OCI-LY7 (cell line): ENCODE measurements at regions of chr1 and their contacts with region 1.

Region 1: DNA sequence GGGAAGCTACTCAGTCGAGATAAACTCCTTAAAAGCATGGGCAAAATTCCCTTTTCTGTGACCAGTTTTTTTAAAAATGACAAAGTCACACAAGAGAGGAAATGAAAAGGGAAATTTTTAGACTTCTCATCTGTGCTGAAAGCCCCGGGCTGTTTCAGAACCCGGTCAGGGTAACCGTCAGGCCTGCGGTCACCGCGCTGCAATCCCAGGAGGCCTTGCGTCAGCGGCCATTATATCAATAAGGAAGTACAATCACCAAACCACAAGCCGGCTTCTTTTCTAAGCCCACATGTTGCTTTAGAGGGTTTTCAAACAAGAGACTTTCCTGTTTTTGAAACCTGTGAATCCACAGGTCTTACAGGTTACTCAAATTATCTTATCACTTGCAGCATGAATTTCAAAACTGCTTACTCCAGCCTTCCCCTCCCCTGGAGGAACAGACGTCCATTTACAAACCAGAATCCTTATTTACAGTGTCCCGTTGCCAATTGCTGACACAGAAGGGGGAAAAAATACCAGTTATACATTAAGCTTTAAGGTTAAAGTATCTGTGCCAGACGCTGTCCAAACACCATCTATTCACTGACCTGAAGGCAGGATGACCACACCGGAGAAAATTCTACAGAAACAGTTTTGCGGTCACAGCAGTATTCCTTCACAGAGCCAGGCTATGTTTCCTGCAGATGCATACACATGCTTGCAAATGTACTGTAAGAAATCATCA is 165.3 kb downstream of the TOMM20 start:
- DNase-seq: peak; percentile 97
- H3K4me3 ChIP-seq: peak overlapping the region; percentile 56
- H3K27ac ChIP-seq: peak overlapping the region; percentile 97
- H3K4me1 ChIP-seq: peaks cover 74% of the 10 kb centered on the region
- CTCF ChIP-seq: no peak

Region 2: DNA sequence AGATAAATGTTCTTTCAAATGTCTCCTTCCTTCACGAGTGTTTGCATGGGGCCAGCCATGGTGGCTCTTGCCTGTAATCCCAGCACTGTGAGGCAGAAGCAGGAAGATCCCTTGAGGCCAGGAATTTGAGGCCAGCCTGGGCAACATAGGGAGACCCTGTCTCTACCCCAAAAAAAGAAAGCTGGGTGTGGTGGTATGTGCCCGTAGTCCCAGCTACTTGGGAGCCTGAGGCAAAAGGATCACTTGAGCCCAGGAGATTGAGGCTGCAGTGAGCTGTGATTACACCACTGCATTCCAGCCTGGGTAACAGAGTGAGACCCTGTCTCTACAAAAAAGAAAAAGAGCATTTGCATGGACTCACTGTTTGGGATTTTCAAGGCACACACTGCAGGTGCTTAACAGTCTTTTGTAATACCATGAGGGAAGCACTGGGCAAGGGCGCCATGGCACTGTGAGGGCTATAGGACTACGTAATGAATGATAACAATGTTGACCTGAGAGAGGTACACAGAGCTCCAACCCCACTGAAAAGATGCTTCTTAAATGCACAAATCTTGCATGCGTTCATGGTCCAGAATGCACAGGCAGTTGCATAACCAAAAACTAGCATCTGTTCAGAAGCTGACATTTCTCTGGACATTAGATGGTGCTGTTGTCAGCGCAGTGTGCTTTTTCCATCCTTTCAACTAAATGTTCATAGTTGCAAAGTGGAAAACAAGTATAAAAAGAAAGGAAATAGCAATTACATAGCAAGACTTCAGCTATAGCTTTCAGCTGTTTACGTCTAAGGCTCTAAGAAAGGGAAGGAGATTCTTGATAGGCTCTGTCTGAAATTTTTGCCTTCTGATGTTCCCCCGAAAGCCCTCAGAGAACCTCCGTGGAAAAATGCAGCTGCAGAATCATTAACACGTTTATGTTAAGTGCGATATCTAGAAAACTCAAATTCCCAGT is 476.6 kb before region 1 on chr1:
- CTCF ChIA-PET with region 1: no interaction called
- POLR2A ChIA-PET with region 1: no interaction called
- intact Hi-C with region 1: loop called (anchors 5 kb)
- DNase-seq: peak; percentile 77
- H3K4me3 ChIP-seq: peak overlapping the region; percentile 25
- H3K27ac ChIP-seq: no peak overlapping the region
- H3K4me1 ChIP-seq: peaks cover 42% of the 10 kb centered on the region
- CTCF ChIP-seq: peak; percentile 97

Region 3: GRCh38 chr1:234722904-234723720 is 240.2 kb before region 1 on chr1:
- CTCF ChIA-PET with region 1: no interaction called
- POLR2A ChIA-PET with region 1: interaction called, 4 read pairs
- intact Hi-C with region 1: loop called (anchors 5 kb)
- DNase-seq: peak; percentile 10
- H3K4me3 ChIP-seq: peak overlapping the region; percentile 27
- H3K27ac ChIP-seq: peak overlapping the region; percentile 65
- H3K4me1 ChIP-seq: peaks cover 50% of the 10 kb centered on the region
- CTCF ChIP-seq: no peak

Region 4: GRCh38 chr1:234842726-234843641 is 120.4 kb before region 1 on chr1:
- CTCF ChIA-PET with region 1: no interaction called
- POLR2A ChIA-PET with region 1: no interaction called
- intact Hi-C with region 1: loop called (anchors 5 kb)
- DNase-seq: peak; percentile 66
- H3K4me3 ChIP-seq: peak overlapping the region; percentile 18
- H3K27ac ChIP-seq: peak overlapping the region; percentile 52
- H3K4me1 ChIP-seq: peaks cover 62% of the 10 kb centered on the region
- CTCF ChIP-seq: 0 out of 2 replicates have a peak, but pooled peaks have one; percentile 21

Region 5: DNA sequence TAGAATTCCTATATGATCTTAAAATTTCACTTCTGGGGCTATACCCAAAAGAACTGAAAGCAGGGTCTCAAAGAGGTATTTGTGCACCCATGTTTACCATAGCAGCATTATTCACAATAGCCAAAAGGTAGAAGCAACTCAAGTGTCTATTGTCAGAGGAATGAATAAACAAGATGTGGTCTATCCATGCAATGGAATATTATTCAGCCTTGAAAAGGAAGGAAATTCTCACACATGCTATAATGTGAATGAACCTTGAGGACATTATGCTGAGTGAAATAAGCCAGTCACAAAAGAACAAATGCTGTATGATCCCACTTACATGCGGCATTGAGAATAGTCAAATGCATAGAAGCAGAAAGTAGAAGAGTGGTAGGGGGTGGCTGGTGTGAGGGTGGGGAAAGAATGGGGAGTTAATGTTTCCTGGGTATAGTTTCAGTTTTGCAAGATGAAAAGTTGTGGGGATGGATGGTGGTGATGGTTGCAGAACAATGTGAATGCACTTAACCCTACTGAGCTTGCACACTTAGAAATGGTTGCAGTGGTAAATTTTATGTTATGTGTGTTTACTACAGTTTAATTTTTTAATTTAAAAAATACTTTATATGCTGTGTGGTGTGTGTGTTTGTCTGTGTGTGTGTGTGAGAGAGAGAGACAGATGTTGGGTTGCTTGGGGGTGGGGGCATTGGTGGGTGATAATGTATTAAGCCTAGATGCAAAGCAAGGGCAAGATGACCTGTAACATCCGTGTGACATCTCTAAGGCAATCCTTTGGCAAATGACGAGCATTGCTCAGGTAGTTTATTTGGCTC is 43.0 kb after region 1 on chr1:
- CTCF ChIA-PET with region 1: interaction called, 3 read pairs
- POLR2A ChIA-PET with region 1: interaction called, 9 read pairs
- intact Hi-C with region 1: loop called (anchors 1 kb)
- DNase-seq: no peak
- H3K4me3 ChIP-seq: no peak overlapping the region
- H3K27ac ChIP-seq: peak overlapping the region; percentile 87
- H3K4me1 ChIP-seq: peaks cover 95% of the 10 kb centered on the region
- CTCF ChIP-seq: no peak

Region 6: GRCh38 chr1:235075188-235075926 is 112.0 kb after region 1 on chr1:
- CTCF ChIA-PET with region 1: no interaction called
- POLR2A ChIA-PET with region 1: interaction called, 3 read pairs
- intact Hi-C with region 1: loop called (anchors 2 kb)
- DNase-seq: peak; percentile 57
- H3K4me3 ChIP-seq: peak overlapping the region; percentile 23
- H3K27ac ChIP-seq: peak overlapping the region; percentile 62
- H3K4me1 ChIP-seq: peaks cover 70% of the 10 kb centered on the region
- CTCF ChIP-seq: no peak